ENCODE measurements at regions of chr2 and their contacts with region 1.

Region 1: DNA sequence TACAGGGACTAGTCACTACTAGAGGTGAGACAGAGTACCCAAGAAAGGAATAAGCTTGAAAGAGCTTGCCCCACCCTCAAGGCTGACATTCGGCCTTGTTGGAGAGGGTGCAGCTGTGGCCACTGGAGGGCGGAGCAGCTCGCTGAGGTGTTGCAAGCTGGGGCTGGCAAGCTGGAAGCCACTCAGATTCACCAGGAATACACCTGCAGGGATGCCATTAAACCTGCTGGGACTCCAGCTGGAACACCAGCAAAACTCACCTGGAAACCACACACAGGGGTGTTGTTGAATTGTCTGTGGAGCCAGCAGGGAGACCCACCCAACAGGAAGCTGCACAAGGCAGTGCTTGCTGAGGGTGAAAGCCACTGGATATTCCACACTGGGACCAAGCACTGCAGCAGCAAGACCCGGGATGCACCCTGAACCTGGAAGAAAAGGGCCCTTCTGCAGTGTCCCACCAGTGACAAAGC is 26.1 kb downstream of the KCTD18 start:
- DNase-seq: peak; percentile 29 to 71
- ATAC-seq: peak; percentile 79
- H3K4me3 ChIP-seq: no peak overlapping the region
- H3K27ac ChIP-seq: peak overlapping the region in 1 of 2 experiments; percentile 70; a peak in 3 of 6 replicates
- H3K4me1 ChIP-seq: peaks cover 61% of the 10 kb centered on the region
- CTCF ChIP-seq: peak; percentile 67
- EP300 ChIP-seq: no peak
- POLR2A ChIP-seq: no peak
- RAD21 ChIP-seq: peak; percentile 64 to 67

Region 2: GRCh38 chr2:199973703-199974102 is 510.1 kb before region 1 on chr2:
- CTCF ChIA-PET with region 1: interaction called, 64 read pairs
- POLR2A ChIA-PET with region 1: no interaction called
- DNase-seq: peak; percentile 15 to 46
- ATAC-seq: peak; percentile 70 to 81; a peak in 5 of 6 replicates
- H3K4me3 ChIP-seq: no peak overlapping the region
- H3K27ac ChIP-seq: peak overlapping the region in 1 of 2 experiments; percentile 80; a peak in 3 of 6 replicates
- H3K4me1 ChIP-seq: peaks cover 28% of the 10 kb centered on the region
- CTCF ChIP-seq: peak; percentile 82
- EP300 ChIP-seq: no peak
- POLR2A ChIP-seq: no peak
- RAD21 ChIP-seq: peak; percentile 84 to 87

Region 3: DNA sequence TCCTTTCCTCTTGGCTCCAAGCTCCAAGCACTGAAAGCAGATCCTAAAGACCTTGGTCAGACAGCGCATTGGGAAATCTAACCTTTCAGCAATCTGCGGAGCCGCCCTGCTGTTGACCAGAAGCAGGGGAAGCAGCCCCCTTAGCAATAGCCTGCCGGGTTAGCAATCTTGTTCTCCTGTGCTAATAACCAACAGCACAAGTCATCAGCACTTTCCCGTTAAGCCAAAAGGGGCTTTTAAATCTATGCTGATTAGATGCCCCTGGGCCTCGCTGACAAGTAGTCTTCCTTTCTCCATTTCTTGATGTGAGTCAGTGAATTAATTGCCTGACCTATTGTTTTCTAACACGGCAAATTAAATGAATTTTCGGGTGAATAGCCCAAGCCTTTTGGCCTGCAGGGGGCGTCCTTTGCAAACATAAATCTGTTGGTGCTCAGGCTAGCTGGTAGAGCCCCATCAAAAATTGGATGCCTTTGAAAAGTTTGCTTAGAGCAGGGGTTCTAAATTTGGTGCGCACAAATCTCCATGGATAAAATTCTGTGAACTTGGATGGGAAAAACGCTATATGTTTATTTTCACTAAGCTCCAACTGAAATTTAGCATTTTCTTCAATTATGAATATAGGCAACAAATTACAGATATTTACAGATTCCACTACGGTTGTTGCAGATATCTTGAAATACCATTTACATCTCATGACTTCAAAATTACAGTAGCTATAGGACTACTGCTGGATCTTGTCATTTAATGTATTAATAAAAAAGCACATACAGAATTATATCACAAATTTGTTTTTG is 503.7 kb before region 1 on chr2:
- CTCF ChIA-PET with region 1: interaction called, 64 read pairs
- POLR2A ChIA-PET with region 1: no interaction called
- DNase-seq: peak; percentile 41 to 66
- ATAC-seq: peak; percentile 62 to 81; a peak in 5 of 6 replicates
- H3K4me3 ChIP-seq: no peak overlapping the region
- H3K27ac ChIP-seq: peak overlapping the region; percentile 72
- H3K4me1 ChIP-seq: peaks cover 39% of the 10 kb centered on the region
- CTCF ChIP-seq: peak; percentile 94
- EP300 ChIP-seq: no peak
- POLR2A ChIP-seq: no peak
- RAD21 ChIP-seq: peak; percentile 93 to 97

Region 4: DNA sequence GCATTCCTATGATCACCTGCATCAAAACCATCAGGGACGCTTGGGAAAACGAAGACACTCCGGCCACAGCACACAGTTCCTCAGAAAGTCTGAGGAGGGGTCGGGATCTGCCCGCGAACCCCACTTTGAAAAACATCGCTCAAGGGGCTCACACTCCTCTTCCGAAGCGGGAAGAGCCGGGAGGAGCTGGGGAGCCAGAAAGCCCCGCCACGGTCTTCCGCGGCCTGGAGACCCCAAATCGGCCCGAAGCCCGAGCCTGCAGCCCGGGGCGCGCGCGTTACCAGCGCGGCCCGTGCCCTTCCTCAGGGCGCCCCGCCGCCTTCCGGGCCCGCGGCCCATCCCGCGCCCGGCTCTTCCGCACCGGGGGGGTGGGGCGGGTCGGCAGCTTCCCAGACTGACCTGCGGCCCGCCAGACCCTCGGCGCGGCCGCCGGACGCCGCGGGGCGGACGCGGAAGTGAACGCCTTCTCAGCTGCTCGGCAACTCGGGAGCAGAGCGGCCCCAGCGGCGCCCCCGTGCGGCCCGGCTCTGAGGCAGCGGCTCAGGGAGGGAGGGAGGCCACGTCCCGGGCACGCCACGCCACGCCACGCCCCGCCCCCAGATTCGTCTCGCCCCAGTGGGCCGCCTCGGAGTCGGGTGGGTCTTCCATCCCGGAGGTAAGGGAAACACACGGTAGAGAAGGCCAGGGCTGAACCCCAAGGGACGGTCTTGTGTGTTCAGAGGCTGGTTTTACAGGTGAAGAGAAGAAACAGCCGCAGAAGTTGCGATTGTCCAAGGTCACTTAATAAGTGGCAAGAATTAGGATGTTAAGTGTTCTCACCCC is 26.1 kb after region 1 on chr2 and contains the start of gene KCTD18:
- CTCF ChIA-PET with region 1: interaction called, 16 read pairs
- POLR2A ChIA-PET with region 1: interaction called, 11 read pairs
- DNase-seq: peak; percentile 85 to 87
- ATAC-seq: peak; percentile 97 to 98
- H3K4me3 ChIP-seq: peak within 1 kb of the TSS; percentile 59
- H3K27ac ChIP-seq: peak within 1 kb of the TSS; percentile 87 to 99
- H3K4me1 ChIP-seq: peaks cover 21% of the 10 kb centered on the region
- CTCF ChIP-seq: peak; percentile 78
- EP300 ChIP-seq: no peak
- POLR2A ChIP-seq: peak; percentile 56
- RAD21 ChIP-seq: peak; percentile 48 to 71
- polyA plus RNA-seq, gene KCTD18: 15.3 and 21.3 TPM in 2 replicates

Region 5: DNA sequence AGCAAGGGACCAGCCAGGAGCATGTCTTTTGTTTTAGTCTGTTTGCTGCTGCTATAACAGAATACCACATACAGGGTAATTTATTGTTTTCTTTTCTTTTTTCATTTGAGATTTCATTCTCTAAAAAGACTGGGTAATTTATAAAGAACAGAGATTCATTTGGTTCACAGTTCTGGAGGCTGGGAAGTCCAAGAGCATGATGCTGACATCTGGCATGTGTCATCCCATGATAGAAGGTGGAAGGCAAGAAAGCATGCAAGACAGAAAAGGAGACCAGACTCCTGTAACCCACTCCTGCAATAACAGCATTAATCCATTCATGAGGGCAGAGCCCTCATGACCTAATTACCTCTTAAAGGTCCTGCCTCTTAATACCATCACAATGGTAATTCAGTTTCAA is 57.0 kb after region 1 on chr2:
- CTCF ChIA-PET with region 1: no interaction called
- POLR2A ChIA-PET with region 1: no interaction called
- DNase-seq: no peak
- ATAC-seq: no peak
- H3K4me3 ChIP-seq: no peak overlapping the region
- H3K27ac ChIP-seq: no peak overlapping the region
- H3K4me1 ChIP-seq: no peaks in the 10 kb centered on the region
- CTCF ChIP-seq: no peak
- EP300 ChIP-seq: no peak
- POLR2A ChIP-seq: no peak
- RAD21 ChIP-seq: no peak

Region 6: GRCh38 chr2:200567932-200568331 is 84.2 kb after region 1 on chr2:
- CTCF ChIA-PET with region 1: no interaction called
- POLR2A ChIA-PET with region 1: no interaction called
- DNase-seq: no peak
- ATAC-seq: no peak
- H3K4me3 ChIP-seq: no peak overlapping the region
- H3K27ac ChIP-seq: no peak overlapping the region
- H3K4me1 ChIP-seq: peaks cover 5% of the 10 kb centered on the region; the same call in 1 of the 3 replicates
- CTCF ChIP-seq: no peak
- EP300 ChIP-seq: no peak
- POLR2A ChIP-seq: no peak
- RAD21 ChIP-seq: no peak

Measured in A549 (cell line).